OCI-LY7 (cell line): ENCODE measurements at regions of chr14 and their contacts with region 1.

Region 1: GRCh38 chr14:22699801-22700564 is 55.8 kb upstream of the OR6J1 start:
- DNase-seq: no peak
- H3K4me3 ChIP-seq: no peak overlapping the region
- H3K27ac ChIP-seq: no peak overlapping the region
- H3K4me1 ChIP-seq: no peaks in the 10 kb centered on the region
- CTCF ChIP-seq: no peak

Region 2: DNA sequence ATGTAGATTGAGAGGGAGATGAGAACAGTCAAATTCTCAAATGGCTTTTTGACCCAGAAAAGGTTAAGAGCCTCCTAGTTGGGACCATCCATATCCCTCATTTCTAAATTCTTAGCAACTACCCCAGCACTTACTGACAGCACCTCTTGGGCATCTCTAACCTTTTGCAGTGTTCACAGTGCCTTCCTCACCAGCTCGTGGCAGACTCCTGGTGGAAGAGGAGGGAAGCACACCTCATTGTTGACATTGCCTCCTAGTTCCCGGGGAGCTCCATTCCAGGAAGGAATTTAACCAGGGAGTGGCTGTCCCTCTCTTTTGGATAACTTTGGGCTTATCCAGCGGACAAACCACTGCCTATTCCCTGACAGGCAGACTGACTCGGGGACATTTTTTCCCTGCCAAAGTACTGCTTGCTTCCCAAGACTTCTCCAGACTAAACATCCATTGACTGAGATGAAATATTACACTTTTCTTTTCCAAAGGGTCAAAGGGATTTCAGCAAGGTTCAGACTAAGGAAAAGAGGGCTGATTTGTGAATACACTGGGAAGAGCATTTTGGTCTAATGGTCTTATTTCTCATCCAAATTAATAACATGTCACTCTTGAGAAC is 46.9 kb before region 1 on chr14:
- CTCF ChIA-PET with region 1: no interaction called
- POLR2A ChIA-PET with region 1: no interaction called
- intact Hi-C with region 1: loop called (anchors 5 kb)
- DNase-seq: peak; percentile 72
- H3K4me3 ChIP-seq: no peak overlapping the region
- H3K27ac ChIP-seq: no peak overlapping the region
- H3K4me1 ChIP-seq: no peaks in the 10 kb centered on the region
- CTCF ChIP-seq: peak; percentile 84